Sigmoid colon (tissue), 7 donors: ENCODE measurements at regions of chr9 and their contacts with region 1.

Region 1: DNA sequence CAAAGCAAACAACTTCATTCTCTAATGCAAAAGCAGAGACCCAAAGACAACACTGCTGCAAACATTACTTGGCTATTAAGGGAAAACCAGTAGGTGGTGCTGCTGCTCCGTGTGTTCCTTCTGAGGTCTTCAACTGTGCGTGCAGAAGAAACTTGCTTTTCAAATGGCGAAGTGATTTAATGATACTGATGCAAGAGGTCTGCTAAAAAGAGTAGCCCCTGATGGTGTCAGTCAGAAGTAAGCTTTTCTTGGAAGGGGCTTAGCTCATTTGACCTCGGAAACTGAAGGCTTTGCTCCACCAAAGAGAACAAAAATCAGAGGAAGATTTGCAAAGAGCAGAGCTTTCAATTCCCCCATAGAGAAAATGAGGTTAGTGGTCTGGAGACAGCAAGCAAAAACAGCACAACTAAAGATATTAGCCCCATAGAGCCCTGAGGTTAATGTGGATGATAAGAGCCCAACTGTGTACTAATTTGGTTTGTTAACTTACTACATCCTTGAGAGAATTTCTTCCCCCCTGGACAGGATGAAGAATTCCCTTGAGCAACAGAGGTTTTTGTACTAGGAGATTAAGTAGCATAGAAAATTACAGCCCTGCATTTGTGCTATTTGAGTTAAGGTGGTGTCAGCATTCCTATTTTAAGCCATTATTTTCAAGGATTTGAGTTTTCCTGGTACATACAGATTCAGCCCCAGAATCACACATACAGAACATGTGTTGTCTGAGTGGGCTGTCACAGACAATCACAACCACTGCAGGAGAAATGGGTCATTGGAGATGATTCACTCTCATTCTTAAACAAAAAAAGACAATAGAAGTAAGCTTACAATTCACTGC is 153.2 kb upstream of the C9orf72 start:
- DNase-seq: no peak
- H3K4me3 ChIP-seq: no peak overlapping the region
- H3K27ac ChIP-seq: no peak overlapping the region
- H3K4me1 ChIP-seq: peaks cover 0 to 8% (median 0%) of the 10 kb centered on the region in 4 donors
- H3K27me3 ChIP-seq: no peaks in the 10 kb centered on the region
- CTCF ChIP-seq: peak in 3 of 4 experiments; percentile 55 to 76 (median 64)
- EP300 ChIP-seq: no peak
- POLR2A ChIP-seq: no peak

Region 2: GRCh38 chr9:28073270-28073669 is 346.8 kb after region 1 on chr9:
- intact Hi-C with region 1: loop called (anchors 5 kb)
- DNase-seq: no peak
- H3K4me3 ChIP-seq: no peak overlapping the region
- H3K27ac ChIP-seq: no peak overlapping the region
- H3K4me1 ChIP-seq: no peaks in the 10 kb centered on the region
- H3K27me3 ChIP-seq: no peaks in the 10 kb centered on the region
- CTCF ChIP-seq: peak in 3 of 4 experiments; percentile 19 to 37 (median 25)
- EP300 ChIP-seq: no peak
- POLR2A ChIP-seq: no peak